Activated T-helper 2 cell treated with anti-CD3 and anti-CD28 coated beads, Interferon-gamma antibody, Interleukin-2, Interleukin-4, amounts not matched to agents 10 μg/mL and 5 μg/mL and 100 μg/mL, durations not matched to agents 14 hours and 24 hours and 36 hours (primary cell): ENCODE measurements at regions of chr4 and their contacts with region 1.

Region 1: DNA sequence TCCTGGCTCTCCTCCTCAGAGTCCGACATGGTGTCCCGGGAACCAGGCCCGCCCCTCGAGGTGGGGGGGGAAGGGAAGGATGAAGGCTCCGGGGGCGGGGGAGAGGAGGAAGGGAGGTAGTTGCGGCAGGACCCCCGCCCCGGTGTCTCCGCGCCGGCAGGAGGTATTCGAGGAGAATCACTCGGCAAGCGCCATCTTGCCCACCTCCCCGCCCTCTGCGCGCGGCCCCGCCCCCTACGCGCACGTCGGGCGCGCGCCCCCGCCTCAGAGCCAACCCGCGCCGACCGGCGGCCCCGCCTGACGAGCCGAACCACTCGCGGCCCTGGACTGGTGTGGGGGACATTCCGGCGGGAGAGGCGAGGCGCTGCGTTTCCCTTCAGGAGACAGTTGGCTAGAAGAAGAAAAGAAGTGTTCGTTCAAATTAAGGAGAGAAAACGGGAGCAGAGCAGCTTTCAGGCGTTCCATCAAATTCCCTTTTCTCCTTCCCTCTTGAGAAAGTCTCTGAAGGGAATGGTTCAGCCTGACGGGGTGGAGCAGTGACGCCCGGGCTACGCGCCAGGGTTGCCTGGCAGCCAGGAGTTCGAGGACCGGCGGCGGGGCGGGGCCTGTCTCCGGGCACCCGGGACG is at the start of gene RAB28:
- DNase-seq: peak; percentile 90
- H3K4me3 Mint-ChIP-seq: peak within 1 kb of the TSS; percentile 86
- H3K27ac Mint-ChIP-seq: peak within 1 kb of the TSS; percentile 96
- H3K4me1 Mint-ChIP-seq: peaks cover 25% of the 10 kb centered on the region
- H3K27me3 Mint-ChIP-seq: peaks cover 20% of the 10 kb centered on the region
- total RNA-seq, gene RAB28: 17.4 and 19.3 TPM in 2 replicates

Region 2: DNA sequence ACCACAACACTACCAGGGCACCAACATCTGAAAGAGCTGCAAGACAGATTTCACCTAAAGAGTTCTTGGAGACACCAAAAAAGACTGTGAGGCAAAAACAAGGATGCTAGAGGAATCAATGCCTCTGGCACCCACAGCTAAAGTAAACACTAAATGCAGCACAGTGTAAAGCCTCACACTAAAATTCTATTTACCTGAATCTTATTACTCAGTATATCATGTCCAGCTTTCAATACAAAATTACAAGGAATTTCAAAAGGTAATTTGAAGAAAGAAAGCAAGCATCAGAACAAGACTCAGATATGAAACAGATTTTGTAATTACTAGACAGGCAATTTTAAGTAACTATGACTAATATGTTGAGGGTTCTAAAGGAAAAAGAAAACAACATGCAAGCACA is 19.7 kb before region 1 on chr4:
- intact Hi-C with region 1: loop called (anchors 2 kb)
- DNase-seq: no peak
- H3K4me3 Mint-ChIP-seq: no peak overlapping the region
- H3K27ac Mint-ChIP-seq: no peak overlapping the region
- H3K4me1 Mint-ChIP-seq: peaks cover 13% of the 10 kb centered on the region
- H3K27me3 Mint-ChIP-seq: no peaks in the 10 kb centered on the region

Region 3: GRCh38 chr4:13511101-13511500 is 26.9 kb after region 1 on chr4:
- intact Hi-C with region 1: no loop called
- DNase-seq: no peak
- H3K4me3 Mint-ChIP-seq: no peak overlapping the region
- H3K27ac Mint-ChIP-seq: no peak overlapping the region
- H3K4me1 Mint-ChIP-seq: no peaks in the 10 kb centered on the region
- H3K27me3 Mint-ChIP-seq: peaks cover 27% of the 10 kb centered on the region

Region 4: DNA sequence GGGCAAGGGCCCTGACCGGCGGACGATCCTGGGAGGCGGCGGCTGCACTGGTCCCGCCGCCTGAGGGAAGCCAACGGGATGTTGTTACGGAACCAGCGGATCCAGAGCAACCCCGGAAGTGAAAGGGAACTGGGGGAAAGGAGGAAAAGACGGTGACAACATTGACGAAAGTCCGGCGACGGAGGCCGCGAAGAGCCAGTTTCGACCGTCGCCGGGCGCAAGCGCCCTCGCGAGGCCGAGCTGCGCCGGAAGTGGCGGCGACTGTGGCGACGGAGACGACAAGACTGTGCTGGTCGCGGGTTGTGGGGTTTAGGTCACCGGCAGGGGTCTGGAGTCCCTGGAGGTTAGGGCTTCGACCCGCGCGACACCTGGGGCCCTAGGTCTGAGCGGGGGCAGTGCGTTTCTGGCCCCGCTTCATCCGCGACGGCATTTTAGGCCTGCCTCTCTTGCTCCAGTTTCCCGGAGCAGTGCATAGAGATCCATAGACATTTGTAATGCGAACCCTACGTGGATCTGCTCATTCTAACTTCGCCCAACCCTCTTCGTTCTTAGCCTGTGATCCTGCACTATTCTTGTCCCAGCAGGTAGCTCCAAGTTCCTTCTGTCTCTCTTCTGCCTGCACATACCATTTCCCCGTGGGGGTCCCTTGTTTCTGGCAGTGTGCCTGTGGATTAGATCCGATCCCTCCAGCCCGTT is 143.5 kb after region 1 on chr4 and contains the start of gene BOD1L1:
- intact Hi-C with region 1: loop called (anchors 10 kb)
- DNase-seq: peak; percentile 78
- H3K4me3 Mint-ChIP-seq: peak within 1 kb of the TSS; percentile 98
- H3K27ac Mint-ChIP-seq: peak within 1 kb of the TSS; percentile 96
- H3K4me1 Mint-ChIP-seq: peaks cover 21% of the 10 kb centered on the region
- H3K27me3 Mint-ChIP-seq: no peaks in the 10 kb centered on the region
- total RNA-seq, gene BOD1L1: 41.5 and 42.2 TPM in 2 replicates